Endothelial cell of umbilical vein (primary cell): ENCODE measurements at regions of chr6 and their contacts with region 1.

Region 1: GRCh38 chr6:131519670-131520436 is 53.2 kb upstream of the ARG1 start:
- DNase-seq: peak; percentile 54
- H3K4me3 ChIP-seq: no peak overlapping the region
- H3K27ac ChIP-seq: no peak overlapping the region
- H3K4me1 ChIP-seq: no peaks in the 10 kb centered on the region
- H3K27me3 ChIP-seq: no peaks in the 10 kb centered on the region
- CTCF ChIP-seq: peak; percentile 49 to 65
- POLR2A ChIP-seq: no peak

Region 2: GRCh38 chr6:131083687-131084086 is 436.2 kb before region 1 on chr6:
- CTCF ChIA-PET with region 1: no interaction called
- POLR2A ChIA-PET with region 1: interaction called, 13 read pairs
- dilution Hi-C with region 1: no loop called
- intact Hi-C with region 1: no loop called
- DNase-seq: no peak
- H3K4me3 ChIP-seq: no peak overlapping the region
- H3K27ac ChIP-seq: no peak overlapping the region
- H3K4me1 ChIP-seq: no peaks in the 10 kb centered on the region
- H3K27me3 ChIP-seq: no peaks in the 10 kb centered on the region
- CTCF ChIP-seq: no peak
- POLR2A ChIP-seq: no peak